ENCODE measurements at regions of chr7 and their contacts with region 1.

Region 1: DNA sequence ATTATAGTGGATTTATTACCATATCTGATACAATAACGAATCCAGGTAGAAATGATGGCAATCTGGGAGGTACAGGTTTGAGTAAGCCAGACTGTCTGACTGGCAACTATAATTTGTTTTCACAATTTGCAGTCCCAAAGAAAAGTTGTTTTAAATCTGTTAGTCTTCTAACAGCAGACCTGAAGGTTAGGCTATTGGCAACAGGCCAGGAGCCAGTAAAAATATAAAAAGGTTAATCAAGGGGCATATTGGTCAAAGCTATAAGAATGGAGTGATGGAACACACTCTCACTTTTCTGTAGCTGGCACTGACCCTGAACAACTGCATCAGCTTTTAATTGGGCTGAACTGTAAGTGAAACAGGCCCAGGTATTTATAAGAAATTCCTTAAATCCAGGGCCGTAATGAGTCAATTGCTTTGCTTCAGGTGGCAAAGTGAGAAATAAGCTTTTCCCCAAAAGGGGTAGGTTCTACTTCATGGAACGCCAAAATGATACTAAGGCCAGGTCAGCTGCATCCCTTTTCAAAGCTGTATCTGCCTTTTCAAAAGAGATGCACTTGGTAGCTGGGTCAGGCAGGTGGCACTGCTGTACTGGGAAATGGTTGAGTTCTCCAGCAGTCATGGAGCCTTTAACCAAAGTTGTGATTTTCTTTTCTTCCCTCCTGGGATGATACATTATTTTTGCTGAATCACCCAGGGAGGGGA is 7.0 kb upstream of the GPR22 start:
- DNase-seq: peak; percentile 49 to 56
- H3K4me3 ChIP-seq: no peak overlapping the region
- H3K4me1 ChIP-seq: no peaks in the 10 kb centered on the region; the same call in 1 of the 2 replicates
- H3K27me3 ChIP-seq: no peaks in the 10 kb centered on the region

Region 2: GRCh38 chr7:107725151-107725740 is 262.4 kb after region 1 on chr7:
- in situ Hi-C with region 1: loop called (anchors 10 kb)
- DNase-seq: peak; percentile 52 to 63
- H3K4me3 ChIP-seq: no peak overlapping the region
- H3K4me1 ChIP-seq: no peaks in the 10 kb centered on the region
- H3K27me3 ChIP-seq: peaks cover 10% of the 10 kb centered on the region; the same call in 1 of the 2 replicates